B cell (primary cell): ENCODE measurements at regions of chr10 and their contacts with region 1.

Region 1: GRCh38 chr10:97498076-97498840 is at the start of gene MMS19:
- DNase-seq: peak; percentile 99
- ATAC-seq: peak; percentile 87
- H3K4me3 ChIP-seq: peak within 1 kb of the TSS; percentile 92 to 98 (median 96)
- H3K4me3 Mint-ChIP-seq: peak within 1 kb of the TSS; percentile 99
- H3K27ac ChIP-seq: peak within 1 kb of the TSS; percentile 77 to 91
- H3K27ac Mint-ChIP-seq: peak within 1 kb of the TSS; percentile 99
- H3K4me1 ChIP-seq: peaks cover 21% of the 10 kb centered on the region in 2 donors
- H3K4me1 Mint-ChIP-seq: peaks cover 38% of the 10 kb centered on the region
- H3K27me3 ChIP-seq: peaks cover 0 to 27% (median 16%) of the 10 kb centered on the region in 4 experiments
- H3K27me3 Mint-ChIP-seq: peaks cover 31% of the 10 kb centered on the region
- CTCF ChIP-seq: no peak
- total RNA-seq, gene MMS19: 78.0 and 82.1 TPM in 2 replicates

Region 2: GRCh38 chr10:97259119-97259518 is 239.1 kb before region 1 on chr10:
- CTCF ChIA-PET with region 1: no interaction called
- POLR2A ChIA-PET with region 1: no interaction called
- intact Hi-C with region 1: no loop called
- DNase-seq: no peak
- ATAC-seq: no peak
- H3K4me3 ChIP-seq: no peak overlapping the region
- H3K4me3 Mint-ChIP-seq: no peak overlapping the region
- H3K27ac ChIP-seq: no peak overlapping the region
- H3K27ac Mint-ChIP-seq: no peak overlapping the region
- H3K4me1 ChIP-seq: no peaks in the 10 kb centered on the region
- H3K4me1 Mint-ChIP-seq: no peaks in the 10 kb centered on the region
- H3K27me3 ChIP-seq: no peaks in the 10 kb centered on the region
- H3K27me3 Mint-ChIP-seq: no peaks in the 10 kb centered on the region
- CTCF ChIP-seq: no peak

Region 3: DNA sequence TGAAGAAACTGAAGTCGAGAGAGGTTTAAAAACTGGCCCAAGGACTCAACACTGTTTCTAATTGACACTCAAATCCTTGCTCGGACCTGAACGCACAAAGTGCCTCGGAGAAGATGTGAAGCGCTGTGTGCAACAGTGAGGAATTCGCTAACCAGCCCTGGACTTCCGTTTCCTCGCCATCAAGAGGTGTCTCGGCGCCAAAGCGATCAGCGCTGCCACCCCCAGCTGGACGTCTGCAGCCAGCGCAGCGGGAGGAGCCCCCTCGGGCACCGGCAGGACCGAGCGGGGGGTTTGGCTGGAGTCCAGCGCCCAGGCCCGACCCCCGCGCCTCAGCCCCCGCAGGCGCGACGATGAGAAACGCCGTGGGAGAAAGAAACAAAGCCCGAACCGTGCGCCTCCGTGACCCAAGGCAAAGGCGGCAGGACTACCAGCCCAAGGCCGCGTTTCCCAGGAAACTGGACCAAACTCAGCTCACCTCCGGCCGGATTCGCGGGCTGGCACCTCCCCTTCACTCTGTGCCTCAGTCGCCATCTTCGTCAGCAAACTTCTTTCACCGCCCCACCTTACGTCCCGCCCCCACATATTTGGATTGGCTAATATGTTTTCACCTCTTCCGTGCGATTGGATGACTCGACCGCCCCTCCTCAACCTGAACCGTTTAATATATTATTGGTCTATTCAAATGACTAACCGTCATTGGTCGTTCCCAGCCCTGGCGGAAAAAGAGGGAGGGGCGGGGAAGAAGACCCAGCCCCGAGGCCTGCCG is 206.0 kb before region 1 on chr10 and contains the start of gene ARHGAP19:
- CTCF ChIA-PET with region 1: no interaction called
- POLR2A ChIA-PET with region 1: no interaction called
- intact Hi-C with region 1: loop called (anchors 1 kb)
- DNase-seq: peak; percentile 96
- ATAC-seq: peak; percentile 98
- H3K4me3 ChIP-seq: peak within 1 kb of the TSS; percentile 63 to 98 (median 91)
- H3K4me3 Mint-ChIP-seq: peak within 1 kb of the TSS; percentile 90
- H3K27ac ChIP-seq: peak within 1 kb of the TSS; percentile 48 to 85
- H3K27ac Mint-ChIP-seq: peak within 1 kb of the TSS; percentile 86
- H3K4me1 ChIP-seq: peaks cover 6 to 12% of the 10 kb centered on the region in 2 donors
- H3K4me1 Mint-ChIP-seq: peaks cover 16% of the 10 kb centered on the region
- H3K27me3 ChIP-seq: no peaks in the 10 kb centered on the region
- H3K27me3 Mint-ChIP-seq: no peaks in the 10 kb centered on the region
- CTCF ChIP-seq: no peak
- total RNA-seq, gene ARHGAP19: 21.7 and 22.5 TPM in 2 replicates

Region 4: DNA sequence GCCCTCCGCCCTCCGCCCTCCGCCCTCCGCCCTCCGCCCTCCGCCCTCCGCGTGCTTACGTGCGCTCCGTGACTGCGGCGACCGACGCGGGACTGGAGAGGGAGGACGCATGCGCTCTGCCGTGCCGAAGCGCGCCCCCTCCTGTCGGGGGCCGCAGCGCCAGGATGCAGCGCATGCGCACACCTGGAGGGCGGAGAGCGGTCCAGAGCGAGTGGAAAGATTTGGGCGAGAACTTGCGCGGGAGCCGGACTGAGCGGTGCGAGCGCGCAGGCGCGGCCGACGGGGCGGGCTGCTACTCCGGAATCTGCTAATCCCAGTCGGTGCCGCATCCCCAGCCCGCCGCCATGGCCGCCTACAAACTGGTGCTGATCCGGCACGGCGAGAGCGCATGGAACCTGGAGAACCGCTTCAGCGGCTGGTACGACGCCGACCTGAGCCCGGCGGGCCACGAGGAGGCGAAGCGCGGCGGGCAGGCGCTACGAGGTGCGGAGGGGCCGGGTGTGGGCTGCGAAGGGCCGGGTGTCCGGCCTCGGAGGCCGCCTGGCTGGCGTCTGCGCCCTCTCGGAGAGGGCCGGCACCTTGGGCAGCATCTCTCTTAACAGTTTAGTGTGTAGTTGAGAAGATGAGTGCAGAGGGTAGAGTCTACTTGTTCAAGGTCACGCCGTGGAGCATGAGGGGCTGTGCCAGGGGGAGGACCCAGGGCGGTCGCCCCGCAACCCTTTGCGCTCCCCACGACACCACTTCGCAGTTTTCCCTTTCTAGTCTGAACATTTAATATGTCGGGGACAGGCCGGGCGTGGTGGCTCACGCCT is 72.1 kb before region 1 on chr10 and contains the start of gene PGAM1:
- CTCF ChIA-PET with region 1: no interaction called
- POLR2A ChIA-PET with region 1: no interaction called
- intact Hi-C with region 1: loop called (anchors 1 kb)
- DNase-seq: peak; percentile 98
- ATAC-seq: peak; percentile 87
- H3K4me3 ChIP-seq: peak within 1 kb of the TSS; percentile 72 to 87 (median 80)
- H3K4me3 Mint-ChIP-seq: peak within 1 kb of the TSS; percentile 97
- H3K27ac ChIP-seq: peak within 1 kb of the TSS; percentile 72 to 81
- H3K27ac Mint-ChIP-seq: peak within 1 kb of the TSS; percentile 99
- H3K4me1 ChIP-seq: peaks cover 21 to 31% of the 10 kb centered on the region in 2 donors
- H3K4me1 Mint-ChIP-seq: peaks cover 43% of the 10 kb centered on the region
- H3K27me3 ChIP-seq: no peaks in the 10 kb centered on the region
- H3K27me3 Mint-ChIP-seq: no peaks in the 10 kb centered on the region
- CTCF ChIP-seq: peak; percentile 65
- total RNA-seq, gene PGAM1: 80.3 and 83.4 TPM in 2 replicates

Region 5: DNA sequence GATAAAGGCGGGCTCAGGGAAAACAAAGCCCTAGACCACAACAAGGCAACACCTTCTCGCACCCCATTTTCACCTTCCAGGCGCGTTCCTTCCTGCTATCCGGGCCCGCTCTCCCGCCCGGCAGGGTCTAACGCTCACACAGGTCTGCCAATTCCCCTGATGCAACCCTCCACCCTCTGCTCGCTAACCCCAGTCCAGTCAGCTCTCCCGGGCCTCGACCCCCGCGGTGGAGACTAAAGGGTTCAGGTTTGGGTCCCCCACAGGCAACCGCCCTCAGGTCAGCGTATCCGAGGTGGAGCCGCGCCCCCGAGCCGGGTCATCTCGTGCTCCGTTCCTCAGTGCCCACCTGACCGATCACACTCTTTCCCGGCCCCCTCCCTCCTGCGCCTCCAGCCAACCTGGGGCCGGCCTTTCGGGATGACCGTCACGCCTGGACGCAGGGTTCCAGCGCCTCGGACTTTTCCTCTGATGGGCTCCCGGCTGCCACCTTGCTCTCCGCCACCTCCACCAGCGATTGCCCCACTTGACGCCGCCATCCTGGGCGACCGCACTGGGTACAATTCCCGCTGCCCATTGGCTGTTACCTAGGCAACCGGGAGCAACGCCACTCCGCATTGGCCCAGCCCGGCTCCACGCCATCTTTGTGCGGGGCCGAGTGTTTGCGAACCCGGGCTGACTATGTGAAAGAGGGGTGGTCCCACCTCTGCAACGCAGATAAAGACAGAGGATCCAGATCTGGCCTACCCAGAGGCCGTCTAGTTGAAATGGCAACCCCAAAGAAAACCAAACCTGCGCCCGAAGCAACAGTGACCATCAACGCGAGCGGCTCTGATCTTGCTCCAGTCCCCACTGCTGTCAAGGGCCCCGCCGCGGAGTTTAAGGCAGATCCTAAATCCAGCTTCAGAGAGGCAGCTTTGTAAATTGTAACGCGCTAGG is 135.0 kb after region 1 on chr10 and contains the start of gene MORN4:
- CTCF ChIA-PET with region 1: no interaction called
- POLR2A ChIA-PET with region 1: no interaction called
- intact Hi-C with region 1: loop called (anchors 1 kb)
- DNase-seq: peak; percentile 93
- ATAC-seq: peak; percentile 99
- H3K4me3 ChIP-seq: peak within 1 kb of the TSS; percentile 34 to 87 (median 63)
- H3K4me3 Mint-ChIP-seq: peak within 1 kb of the TSS; percentile 94
- H3K27ac ChIP-seq: peak within 1 kb of the TSS in 1 of 2 donors; percentile 11
- H3K27ac Mint-ChIP-seq: peak within 1 kb of the TSS; percentile 76
- H3K4me1 ChIP-seq: peaks cover 0 to 11% of the 10 kb centered on the region in 2 donors
- H3K4me1 Mint-ChIP-seq: peaks cover 13% of the 10 kb centered on the region
- H3K27me3 ChIP-seq: peaks cover 0 to 6% (median 0%) of the 10 kb centered on the region in 4 experiments
- H3K27me3 Mint-ChIP-seq: no peaks in the 10 kb centered on the region
- CTCF ChIP-seq: no peak
- total RNA-seq, gene MORN4: 2.8 TPM in 2 replicates